Lower leg skin (tissue), 4 donors: ENCODE measurements at regions of chr2 and their contacts with region 1.

Region 1: GRCh38 chr2:84022810-84023431 is 436.2 kb downstream of the SUCLG1 start:
- DNase-seq: peak in 1 of 2 donors; percentile 21
- H3K4me3 ChIP-seq: no peak overlapping the region
- CTCF ChIP-seq: no peak
- POLR2A ChIP-seq: no peak

Region 2: DNA sequence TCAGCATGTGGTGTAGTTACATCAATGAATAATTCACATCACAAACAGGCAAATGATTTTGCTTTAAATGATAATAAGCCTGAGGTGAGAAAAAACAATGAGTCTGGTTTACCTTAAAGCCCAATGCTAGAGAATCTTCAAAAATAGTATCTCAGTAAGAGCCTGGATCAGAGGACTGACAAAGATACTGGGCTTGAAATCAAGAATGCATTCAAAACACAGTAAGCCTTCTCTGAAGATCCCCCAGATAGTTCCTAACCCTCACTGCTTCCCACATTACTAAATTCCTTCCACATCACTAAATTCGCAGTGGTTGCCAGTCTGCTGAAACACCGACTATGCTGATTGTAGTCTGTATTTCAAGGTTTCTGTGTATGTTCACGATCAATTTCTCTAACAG is 78.7 kb before region 1 on chr2:
- intact Hi-C with region 1: no loop called
- DNase-seq: no peak
- H3K4me3 ChIP-seq: no peak overlapping the region
- CTCF ChIP-seq: no peak
- POLR2A ChIP-seq: no peak

Region 3: GRCh38 chr2:84209941-84210340 is 187.0 kb after region 1 on chr2:
- intact Hi-C with region 1: no loop called
- DNase-seq: no peak
- H3K4me3 ChIP-seq: no peak overlapping the region
- CTCF ChIP-seq: no peak
- POLR2A ChIP-seq: no peak

Region 4: GRCh38 chr2:84314901-84315330 is 292.0 kb after region 1 on chr2:
- intact Hi-C with region 1: loop called (anchors 10 kb)
- DNase-seq: peak; percentile 47 to 92
- H3K4me3 ChIP-seq: no peak overlapping the region
- CTCF ChIP-seq: peak in 1 of 3 donors; percentile 47
- POLR2A ChIP-seq: no peak